HepG2 (cell line): ENCODE measurements at regions of chr13 and their contacts with region 1.

Region 1: DNA sequence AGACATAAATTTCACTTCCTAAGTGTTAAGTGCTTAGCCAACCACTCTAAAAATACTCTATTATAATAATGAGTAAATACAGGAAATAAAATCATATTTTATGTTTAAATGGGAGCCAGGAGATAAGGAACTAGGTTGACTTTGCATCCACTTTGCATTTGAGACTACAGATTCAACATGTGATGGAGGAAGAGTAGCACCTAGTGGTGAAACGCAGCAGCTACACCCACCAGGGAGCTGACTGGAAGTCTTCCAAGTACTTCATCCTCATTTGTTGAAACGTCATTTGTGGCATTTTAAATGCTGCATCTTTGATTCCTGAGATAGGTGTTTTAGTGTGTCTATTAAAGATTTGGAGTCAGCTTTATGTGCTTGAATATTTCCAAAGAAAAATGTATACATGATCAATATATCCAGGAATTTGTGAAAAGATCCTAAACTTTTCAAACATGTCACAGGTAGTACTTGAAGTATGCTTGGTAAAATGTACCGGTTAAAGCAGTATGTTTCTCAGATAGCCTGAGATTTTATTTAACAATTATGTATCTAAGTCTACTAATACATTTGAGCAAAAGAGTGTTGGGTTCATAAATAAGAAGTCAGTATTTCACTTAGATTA is 17.4 kb upstream of the KCTD12 start:
- DNase-seq: peak; percentile 49
- ATAC-seq: peak; percentile 87
- H3K4me3 ChIP-seq: no peak overlapping the region
- H3K27ac ChIP-seq: no peak overlapping the region
- H3K4me1 ChIP-seq: no peaks in the 10 kb centered on the region
- H3K27me3 ChIP-seq: no peaks in the 10 kb centered on the region; a peak in 3 of 5 replicates
- CTCF ChIP-seq: peak; percentile 87
- EP300 ChIP-seq: no peak
- POLR2A ChIP-seq: no peak
- RAD21 ChIP-seq: peak; percentile 68

Region 2: GRCh38 chr13:75694722-75695121 is 1208.9 kb before region 1 on chr13:
- CTCF ChIA-PET with region 1: no interaction called
- POLR2A ChIA-PET with region 1: no interaction called
- in situ Hi-C with region 1: no loop called
- intact Hi-C with region 1: loop called (anchors 5 kb)
- DNase-seq: no peak
- ATAC-seq: no peak
- H3K4me3 ChIP-seq: no peak overlapping the region
- H3K27ac ChIP-seq: no peak overlapping the region
- H3K4me1 ChIP-seq: no peaks in the 10 kb centered on the region
- H3K27me3 ChIP-seq: no peaks in the 10 kb centered on the region
- CTCF ChIP-seq: no peak
- EP300 ChIP-seq: no peak
- POLR2A ChIP-seq: no peak
- RAD21 ChIP-seq: no peak

Region 3: GRCh38 chr13:75870397-75870903 is 1033.2 kb before region 1 on chr13:
- CTCF ChIA-PET with region 1: no interaction called
- POLR2A ChIA-PET with region 1: no interaction called
- in situ Hi-C with region 1: loop called (anchors 5 kb)
- intact Hi-C with region 1: loop called (anchors 1 kb)
- DNase-seq: no peak
- ATAC-seq: peak; percentile 37
- H3K4me3 ChIP-seq: peak overlapping the region; percentile 46 to 67 (median 66)
- H3K27ac ChIP-seq: no peak overlapping the region
- H3K4me1 ChIP-seq: no peaks in the 10 kb centered on the region
- H3K27me3 ChIP-seq: peaks cover 0 to 15% of the 10 kb centered on the region in 2 experiments; a peak in 1 of 5 replicates
- CTCF ChIP-seq: peak; percentile 64
- EP300 ChIP-seq: no peak
- POLR2A ChIP-seq: no peak
- RAD21 ChIP-seq: peak; percentile 41; the same call in 1 of the 2 replicates

Region 4: GRCh38 chr13:75876360-75877050 is 1027.1 kb before region 1 on chr13:
- CTCF ChIA-PET with region 1: interaction called, 4 read pairs
- POLR2A ChIA-PET with region 1: no interaction called
- in situ Hi-C with region 1: loop called (anchors 5 kb)
- intact Hi-C with region 1: no loop called
- DNase-seq: peak; percentile 46
- ATAC-seq: peak; percentile 97
- H3K4me3 ChIP-seq: no peak overlapping the region
- H3K27ac ChIP-seq: no peak overlapping the region
- H3K4me1 ChIP-seq: no peaks in the 10 kb centered on the region
- H3K27me3 ChIP-seq: peaks cover 0 to 10% of the 10 kb centered on the region in 2 experiments; a peak in 2 of 5 replicates
- CTCF ChIP-seq: peak; percentile 78
- EP300 ChIP-seq: no peak
- POLR2A ChIP-seq: no peak
- RAD21 ChIP-seq: peak; percentile 46

Region 5: GRCh38 chr13:76667551-76667950 is 236.1 kb before region 1 on chr13:
- CTCF ChIA-PET with region 1: no interaction called
- POLR2A ChIA-PET with region 1: no interaction called
- in situ Hi-C with region 1: no loop called
- intact Hi-C with region 1: loop called (anchors 1 kb)
- DNase-seq: no peak
- ATAC-seq: no peak
- H3K4me3 ChIP-seq: no peak overlapping the region
- H3K27ac ChIP-seq: no peak overlapping the region
- H3K4me1 ChIP-seq: no peaks in the 10 kb centered on the region
- H3K27me3 ChIP-seq: no peaks in the 10 kb centered on the region; a peak in 1 of 5 replicates
- CTCF ChIP-seq: no peak
- EP300 ChIP-seq: no peak
- POLR2A ChIP-seq: no peak
- RAD21 ChIP-seq: no peak